B cell (primary cell): ENCODE measurements at regions of chr7 and their contacts with region 1.

Region 1: GRCh38 chr7:30026229-30027064 is at the start of gene FKBP14:
- DNase-seq: peak; percentile 94
- ATAC-seq: peak; percentile 76
- H3K4me3 ChIP-seq: peak within 1 kb of the TSS; percentile 84 to 97 (median 90)
- H3K4me3 Mint-ChIP-seq: peak within 1 kb of the TSS; percentile 90
- H3K27ac ChIP-seq: peak within 1 kb of the TSS; percentile 77 to 84
- H3K27ac Mint-ChIP-seq: peak within 1 kb of the TSS; percentile 95
- H3K4me1 ChIP-seq: peaks cover 20 to 27% of the 10 kb centered on the region in 2 donors
- H3K4me1 Mint-ChIP-seq: peaks cover 30% of the 10 kb centered on the region
- H3K27me3 ChIP-seq: no peaks in the 10 kb centered on the region
- H3K27me3 Mint-ChIP-seq: no peaks in the 10 kb centered on the region
- CTCF ChIP-seq: no peak
- total RNA-seq, gene FKBP14: 4.2 and 5.7 TPM in 2 replicates

Region 2: GRCh38 chr7:29988424-29989256 is 37.8 kb before region 1 on chr7:
- CTCF ChIA-PET with region 1: interaction called, 6 read pairs
- POLR2A ChIA-PET with region 1: interaction called, 17 read pairs
- intact Hi-C with region 1: loop called (anchors 1 kb)
- DNase-seq: peak; percentile 72
- ATAC-seq: peak; percentile 25
- H3K4me3 ChIP-seq: peak overlapping the region; percentile 42 to 96 (median 89)
- H3K4me3 Mint-ChIP-seq: peak overlapping the region; percentile 94
- H3K27ac ChIP-seq: peak overlapping the region; percentile 66 to 82
- H3K27ac Mint-ChIP-seq: peak overlapping the region; percentile 97
- H3K4me1 ChIP-seq: peaks cover 32 to 39% of the 10 kb centered on the region in 2 donors
- H3K4me1 Mint-ChIP-seq: peaks cover 41% of the 10 kb centered on the region
- H3K27me3 ChIP-seq: peaks cover 0 to 18% (median 0%) of the 10 kb centered on the region in 4 experiments
- H3K27me3 Mint-ChIP-seq: no peaks in the 10 kb centered on the region
- CTCF ChIP-seq: no peak

Region 3: DNA sequence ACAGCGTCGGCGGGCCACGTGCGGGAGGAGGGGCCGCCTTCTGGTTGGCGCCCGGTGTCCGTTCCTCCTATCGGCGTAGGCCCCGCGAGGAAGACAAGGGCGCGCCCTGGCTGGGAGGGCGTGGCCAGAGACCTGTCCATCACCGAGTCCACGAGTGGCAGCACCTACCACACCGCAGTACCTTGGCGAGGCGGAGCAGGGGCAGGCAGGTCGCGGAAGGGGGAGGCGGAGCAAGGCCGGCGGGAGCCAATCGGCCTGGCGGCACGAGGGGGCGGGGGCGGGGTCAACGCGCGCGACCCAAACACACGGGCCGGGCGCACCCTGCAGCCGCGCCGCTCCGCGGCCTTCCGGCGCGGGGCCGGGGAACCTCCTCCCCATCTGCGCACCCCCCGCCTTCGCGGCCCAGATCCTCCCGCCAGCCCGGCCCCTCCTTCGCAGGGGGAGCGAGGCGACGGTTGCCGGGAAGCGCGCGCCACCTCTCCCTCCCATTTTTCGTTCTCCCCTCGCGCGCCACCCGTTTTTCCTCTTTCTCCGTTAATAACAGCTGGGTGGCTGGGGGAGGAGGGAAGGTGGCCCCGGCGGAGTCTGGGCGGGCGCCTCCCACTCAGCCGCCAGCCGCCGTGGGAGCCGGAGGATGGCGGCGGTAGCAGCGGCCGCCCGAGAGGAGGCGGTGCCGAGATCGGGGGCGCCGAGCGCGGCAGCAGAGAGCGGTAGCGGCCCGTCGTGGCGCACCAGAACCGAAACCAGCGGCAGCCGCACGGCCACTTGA is 258.0 kb after region 1 on chr7 and contains the start of gene ZNRF2:
- CTCF ChIA-PET with region 1: no interaction called
- POLR2A ChIA-PET with region 1: no interaction called
- intact Hi-C with region 1: loop called (anchors 1 kb)
- DNase-seq: peak; percentile 99
- ATAC-seq: peak; percentile 80
- H3K4me3 ChIP-seq: peak within 1 kb of the TSS; percentile 46 to 91 (median 80)
- H3K4me3 Mint-ChIP-seq: peak within 1 kb of the TSS; percentile 88
- H3K27ac ChIP-seq: peak within 1 kb of the TSS; percentile 84 to 90
- H3K27ac Mint-ChIP-seq: peak within 1 kb of the TSS; percentile 96
- H3K4me1 ChIP-seq: peaks cover 19 to 30% of the 10 kb centered on the region in 2 donors
- H3K4me1 Mint-ChIP-seq: peaks cover 44% of the 10 kb centered on the region
- H3K27me3 ChIP-seq: no peaks in the 10 kb centered on the region
- H3K27me3 Mint-ChIP-seq: no peaks in the 10 kb centered on the region
- CTCF ChIP-seq: peak; percentile 41
- total RNA-seq, gene ZNRF2: 32.0 and 33.6 TPM in 2 replicates

Region 4: GRCh38 chr7:30478349-30479201 is 452.1 kb after region 1 on chr7 and contains the start of gene NOD1:
- CTCF ChIA-PET with region 1: no interaction called
- POLR2A ChIA-PET with region 1: no interaction called
- intact Hi-C with region 1: loop called (anchors 10 kb)
- DNase-seq: peak; percentile 74
- ATAC-seq: peak; percentile 89
- H3K4me3 ChIP-seq: peak within 1 kb of the TSS; percentile 62 to 87 (median 84)
- H3K4me3 Mint-ChIP-seq: peak within 1 kb of the TSS; percentile 93
- H3K27ac ChIP-seq: peak within 1 kb of the TSS; percentile 59 to 66
- H3K27ac Mint-ChIP-seq: peak within 1 kb of the TSS; percentile 88
- H3K4me1 ChIP-seq: peaks cover 46 to 47% of the 10 kb centered on the region in 2 donors
- H3K4me1 Mint-ChIP-seq: peaks cover 58% of the 10 kb centered on the region
- H3K27me3 ChIP-seq: no peaks in the 10 kb centered on the region
- H3K27me3 Mint-ChIP-seq: no peaks in the 10 kb centered on the region
- CTCF ChIP-seq: no peak
- total RNA-seq, gene NOD1: 28.8 and 31.2 TPM in 2 replicates

Region 5: GRCh38 chr7:30594549-30595435 is 568.3 kb after region 1 on chr7 and contains the start of gene GARS1:
- CTCF ChIA-PET with region 1: no interaction called
- POLR2A ChIA-PET with region 1: no interaction called
- intact Hi-C with region 1: loop called (anchors 2 kb)
- DNase-seq: peak; percentile 95
- ATAC-seq: peak; percentile 88
- H3K4me3 ChIP-seq: peak within 1 kb of the TSS; percentile 69 to 98 (median 93)
- H3K4me3 Mint-ChIP-seq: peak within 1 kb of the TSS; percentile 95
- H3K27ac ChIP-seq: peak within 1 kb of the TSS; percentile 89 to 98
- H3K27ac Mint-ChIP-seq: peak within 1 kb of the TSS; percentile 97
- H3K4me1 ChIP-seq: peaks cover 21 to 24% of the 10 kb centered on the region in 2 donors
- H3K4me1 Mint-ChIP-seq: peaks cover 57% of the 10 kb centered on the region
- H3K27me3 ChIP-seq: no peaks in the 10 kb centered on the region
- H3K27me3 Mint-ChIP-seq: no peaks in the 10 kb centered on the region
- CTCF ChIP-seq: no peak
- total RNA-seq, gene GARS1: 56.1 and 61.7 TPM in 2 replicates